GM10248 (cell line): ENCODE measurements at regions of chr1 and their contacts with region 1.

Region 1: DNA sequence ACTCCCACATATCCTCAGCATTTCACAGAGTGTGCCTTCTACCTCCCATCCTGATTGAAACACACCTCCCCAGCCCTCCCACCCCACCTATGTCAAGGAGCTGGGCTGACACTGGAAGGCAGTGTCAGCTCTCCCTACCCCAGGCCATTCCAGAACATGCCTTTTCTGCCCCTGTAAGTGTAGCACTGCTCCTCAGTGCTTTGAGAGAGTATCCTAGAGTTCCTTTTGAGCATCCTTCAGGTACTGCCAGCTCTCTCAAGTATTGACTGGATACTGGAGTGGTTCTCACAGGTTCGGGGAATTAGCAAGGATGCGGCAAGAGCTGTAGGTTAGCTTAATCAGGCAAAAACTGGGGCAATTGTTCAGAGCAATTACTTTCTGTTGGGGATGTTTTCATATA is 21.8 kb downstream of the C1orf116 start:
- DNase-seq: no peak
- CTCF ChIP-seq: no peak

Region 2: GRCh38 chr1:207025144-207025880 is 14.6 kb after region 1 on chr1:
- CTCF ChIA-PET with region 1: interaction called, 60 read pairs
- POLR2A ChIA-PET with region 1: interaction called, 3 read pairs
- DNase-seq: no peak
- CTCF ChIP-seq: no peak

Region 3: DNA sequence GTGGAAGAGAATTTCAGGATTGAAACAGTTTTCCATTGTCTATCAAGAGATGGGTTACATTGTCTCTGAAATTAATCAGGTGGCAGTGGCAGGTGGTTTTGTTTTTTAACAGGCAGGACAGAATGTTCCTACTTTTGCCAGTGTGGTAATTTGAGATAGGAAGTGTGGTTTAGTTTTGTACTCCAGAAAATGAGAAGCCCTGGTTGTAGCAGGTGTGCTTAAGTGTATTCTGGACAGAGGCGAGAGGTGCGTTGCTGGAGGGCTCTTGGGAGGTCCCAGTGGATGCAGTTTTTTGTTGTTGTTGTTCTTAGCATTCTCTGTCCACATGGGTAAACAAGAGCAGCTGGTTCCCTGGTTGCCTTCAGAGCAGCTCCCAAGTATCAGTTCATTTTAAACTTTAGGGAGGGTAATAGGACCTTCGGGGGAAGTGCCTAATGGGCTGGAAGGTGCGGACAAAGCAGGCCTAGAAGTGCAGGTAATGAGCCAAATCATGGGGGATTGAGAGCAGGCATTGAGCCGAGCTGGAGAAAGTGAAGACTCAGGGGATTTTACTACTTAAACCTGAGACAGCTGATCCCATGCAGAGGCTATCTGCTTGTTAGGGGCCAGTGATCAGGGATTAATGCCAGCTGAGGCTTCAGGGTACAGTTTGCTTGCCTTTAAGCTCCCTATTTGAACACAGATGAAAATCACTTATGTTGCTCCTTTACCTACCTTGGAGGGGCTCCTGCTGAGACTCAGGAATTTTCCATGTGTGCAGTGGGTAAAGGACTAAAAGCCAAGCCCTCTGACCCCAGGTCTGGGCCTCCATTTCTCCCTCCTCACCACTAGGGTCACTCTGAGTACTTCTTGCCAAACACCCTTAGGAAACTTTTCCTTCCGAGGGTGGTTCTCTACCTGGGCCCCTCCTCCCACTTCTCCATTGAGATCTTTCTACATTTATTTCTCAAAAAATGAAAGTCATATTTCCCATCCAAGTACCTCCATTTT is 48.4 kb after region 1 on chr1:
- CTCF ChIA-PET with region 1: no interaction called
- POLR2A ChIA-PET with region 1: no interaction called
- DNase-seq: no peak
- CTCF ChIP-seq: no peak